Activated CD4-positive, alpha-beta T cell treated with anti-CD3 and anti-CD28 coated beads for 36 hours (primary cell): ENCODE measurements at regions of chr17 and their contacts with region 1.

Region 1: GRCh38 chr17:66541461-66542128 is 239.2 kb downstream of the PRKCA start:
- DNase-seq: no peak
- ATAC-seq: peak; percentile 60
- H3K4me3 Mint-ChIP-seq: no peak overlapping the region
- H3K27ac Mint-ChIP-seq: peak overlapping the region; percentile 72
- H3K4me1 Mint-ChIP-seq: peaks cover 66% of the 10 kb centered on the region
- H3K27me3 Mint-ChIP-seq: no peaks in the 10 kb centered on the region

Region 2: GRCh38 chr17:66387392-66387993 is 154.1 kb before region 1 on chr17:
- CTCF ChIA-PET with region 1: no interaction called
- POLR2A ChIA-PET with region 1: no interaction called
- intact Hi-C with region 1: no loop called
- DNase-seq: no peak
- ATAC-seq: no peak
- H3K4me3 Mint-ChIP-seq: no peak overlapping the region
- H3K27ac Mint-ChIP-seq: peak overlapping the region; percentile 55
- H3K4me1 Mint-ChIP-seq: peaks cover 75% of the 10 kb centered on the region
- H3K27me3 Mint-ChIP-seq: no peaks in the 10 kb centered on the region

Region 3: GRCh38 chr17:66491213-66491612 is 50.4 kb before region 1 on chr17:
- CTCF ChIA-PET with region 1: no interaction called
- POLR2A ChIA-PET with region 1: no interaction called
- intact Hi-C with region 1: no loop called
- DNase-seq: peak; percentile 64
- ATAC-seq: peak; percentile 71
- H3K4me3 Mint-ChIP-seq: no peak overlapping the region
- H3K27ac Mint-ChIP-seq: no peak overlapping the region
- H3K4me1 Mint-ChIP-seq: peaks cover 73% of the 10 kb centered on the region
- H3K27me3 Mint-ChIP-seq: no peaks in the 10 kb centered on the region

Region 4: DNA sequence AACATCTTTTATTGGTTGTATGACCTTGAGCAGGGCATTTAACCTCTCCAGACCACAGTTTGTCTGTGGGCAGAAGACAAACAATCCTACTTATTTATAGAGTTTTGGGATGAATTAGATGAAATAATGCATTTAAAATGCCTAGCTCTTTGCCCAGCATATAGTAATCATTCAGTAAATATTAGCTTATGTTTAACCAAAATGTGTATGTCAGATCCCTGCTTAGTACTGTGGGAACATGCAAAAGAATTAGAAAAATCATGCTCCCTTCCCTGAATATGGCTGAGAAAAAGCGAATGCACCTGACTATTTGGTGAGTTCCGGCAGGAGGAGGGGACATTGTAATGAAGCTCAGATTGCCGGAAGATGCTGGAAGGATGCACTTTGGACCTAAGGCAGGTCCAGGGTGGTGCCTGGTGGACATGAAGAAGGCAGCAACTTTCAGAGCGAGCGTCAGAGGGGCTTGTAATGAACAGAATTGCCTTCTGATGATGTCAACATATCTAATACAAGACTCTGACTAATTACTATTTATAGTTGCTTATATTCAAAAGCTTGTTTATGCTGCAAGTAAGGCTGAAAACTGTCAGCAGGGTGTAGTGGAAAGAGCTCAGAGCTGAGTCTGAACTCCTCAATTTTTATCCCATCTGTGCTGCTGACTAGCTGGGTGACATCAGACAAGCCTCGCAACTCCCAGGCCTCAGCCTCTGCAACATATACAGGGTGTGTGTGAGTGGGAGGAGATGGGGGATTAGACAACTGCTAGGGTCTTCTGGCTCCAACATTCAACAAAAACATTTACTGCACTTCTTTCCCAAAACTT is 18.0 kb before region 1 on chr17:
- CTCF ChIA-PET with region 1: interaction called, 11 read pairs
- POLR2A ChIA-PET with region 1: no interaction called
- intact Hi-C with region 1: loop called (anchors 2 kb)
- DNase-seq: no peak
- ATAC-seq: no peak
- H3K4me3 Mint-ChIP-seq: no peak overlapping the region
- H3K27ac Mint-ChIP-seq: no peak overlapping the region
- H3K4me1 Mint-ChIP-seq: peaks cover 58% of the 10 kb centered on the region
- H3K27me3 Mint-ChIP-seq: no peaks in the 10 kb centered on the region

Region 5: DNA sequence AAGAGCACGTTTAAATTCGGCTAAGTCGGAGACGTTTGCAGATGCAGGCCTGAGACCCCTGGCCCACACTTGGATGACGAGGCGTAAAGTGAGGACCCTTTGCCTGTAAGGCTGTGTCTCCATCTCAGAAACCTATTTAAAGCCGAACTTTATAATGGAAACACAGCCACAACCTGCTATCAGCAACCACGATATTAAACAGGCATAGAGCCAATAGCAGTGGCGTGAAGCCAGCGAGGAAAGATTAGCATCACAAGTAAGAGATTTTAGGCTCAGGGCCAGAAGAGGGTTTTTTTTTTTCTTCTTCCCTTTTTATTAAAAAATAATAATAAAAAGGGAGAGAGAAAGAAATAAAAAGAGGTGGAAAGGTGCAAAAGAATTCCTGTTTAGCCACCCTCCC is 1064.9 kb after region 1 on chr17:
- CTCF ChIA-PET with region 1: no interaction called
- POLR2A ChIA-PET with region 1: no interaction called
- intact Hi-C with region 1: no loop called
- DNase-seq: no peak
- ATAC-seq: no peak
- H3K4me3 Mint-ChIP-seq: no peak overlapping the region
- H3K27ac Mint-ChIP-seq: no peak overlapping the region
- H3K4me1 Mint-ChIP-seq: peaks cover 17% of the 10 kb centered on the region
- H3K27me3 Mint-ChIP-seq: no peaks in the 10 kb centered on the region